OCI-LY7 (cell line): ENCODE measurements at regions of chr17 and their contacts with region 1.

Region 1: DNA sequence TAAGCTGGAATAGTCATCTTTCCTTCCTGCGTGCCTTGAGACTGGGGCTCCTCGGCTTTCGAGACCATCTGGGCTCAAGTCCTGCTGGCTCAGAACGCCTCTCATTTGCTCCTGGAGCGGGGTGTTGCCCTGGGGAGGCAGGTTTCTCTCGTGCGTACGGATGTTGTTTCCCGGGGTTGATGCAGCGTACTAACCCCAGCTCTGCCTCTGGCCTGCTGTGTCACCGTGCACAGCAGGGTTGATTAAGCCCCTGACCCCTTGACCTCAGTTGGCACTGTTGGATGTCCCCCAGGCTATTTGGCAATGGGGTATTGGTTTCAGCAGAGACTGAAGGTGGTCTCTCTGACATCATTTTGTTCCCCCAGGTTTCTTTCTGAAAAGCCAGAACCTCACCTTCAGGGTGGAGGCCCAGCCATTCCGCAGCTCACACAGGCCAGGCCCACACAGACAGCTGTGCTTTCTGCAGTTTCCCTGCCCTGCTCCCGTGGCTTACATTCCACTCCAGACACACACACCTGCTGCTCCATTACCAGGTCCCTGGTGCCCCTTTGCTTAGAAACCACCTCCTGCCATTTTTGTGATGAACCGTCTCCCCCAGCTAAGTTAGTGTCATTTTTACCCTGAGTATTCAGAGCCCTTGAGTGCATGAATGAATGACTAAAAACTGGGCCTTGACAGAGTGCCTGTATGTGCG is 233.5 kb downstream of the CCDC182 start:
- DNase-seq: no peak
- H3K4me3 ChIP-seq: no peak overlapping the region
- H3K27ac ChIP-seq: no peak overlapping the region
- H3K4me1 ChIP-seq: peaks cover 33% of the 10 kb centered on the region
- CTCF ChIP-seq: no peak

Region 2: DNA sequence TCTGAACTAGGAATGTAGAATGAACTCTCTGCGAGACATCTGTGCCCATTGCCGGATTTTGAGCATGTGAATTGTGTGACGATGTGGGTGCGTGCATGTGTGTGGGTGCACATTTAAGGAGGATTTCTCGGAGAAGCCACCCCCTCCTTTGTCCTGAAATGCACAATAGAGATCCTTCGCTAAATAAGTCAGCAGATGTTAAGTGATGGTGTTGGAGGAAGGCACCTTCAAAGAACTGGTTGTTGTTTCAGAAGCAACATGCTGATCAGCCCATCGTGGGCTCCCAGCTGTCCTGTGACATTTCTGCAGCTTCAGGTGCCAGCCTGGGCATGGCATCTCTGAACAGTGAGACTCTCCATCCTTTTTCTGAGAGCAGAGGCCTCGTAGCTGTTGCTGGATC is 60.4 kb before region 1 on chr17:
- CTCF ChIA-PET with region 1: no interaction called
- POLR2A ChIA-PET with region 1: no interaction called
- intact Hi-C with region 1: loop called (anchors 5 kb)
- DNase-seq: no peak
- H3K4me3 ChIP-seq: no peak overlapping the region
- H3K27ac ChIP-seq: no peak overlapping the region
- H3K4me1 ChIP-seq: peaks cover 56% of the 10 kb centered on the region
- CTCF ChIP-seq: no peak